ENCODE measurements at regions of chr10 and their contacts with region 1.

Region 1: GRCh38 chr10:97334370-97335175 is at the start of gene FRAT2:
- DNase-seq: peak; percentile 79 to 98 (median 86)
- ATAC-seq: peak; percentile 83 to 86
- H3K4me3 Mint-ChIP-seq: peak within 1 kb of the TSS; percentile 87 to 98 (median 92)
- H3K27ac Mint-ChIP-seq: peak within 1 kb of the TSS; percentile 87 to 97 (median 96)
- H3K4me1 Mint-ChIP-seq: peaks cover 26 to 48% (median 40%) of the 10 kb centered on the region in 4 donors
- H3K27me3 Mint-ChIP-seq: no peaks in the 10 kb centered on the region
- polyA plus RNA-seq, gene FRAT2: 9.3 to 27.4 (median 23.6) TPM

Region 2: DNA sequence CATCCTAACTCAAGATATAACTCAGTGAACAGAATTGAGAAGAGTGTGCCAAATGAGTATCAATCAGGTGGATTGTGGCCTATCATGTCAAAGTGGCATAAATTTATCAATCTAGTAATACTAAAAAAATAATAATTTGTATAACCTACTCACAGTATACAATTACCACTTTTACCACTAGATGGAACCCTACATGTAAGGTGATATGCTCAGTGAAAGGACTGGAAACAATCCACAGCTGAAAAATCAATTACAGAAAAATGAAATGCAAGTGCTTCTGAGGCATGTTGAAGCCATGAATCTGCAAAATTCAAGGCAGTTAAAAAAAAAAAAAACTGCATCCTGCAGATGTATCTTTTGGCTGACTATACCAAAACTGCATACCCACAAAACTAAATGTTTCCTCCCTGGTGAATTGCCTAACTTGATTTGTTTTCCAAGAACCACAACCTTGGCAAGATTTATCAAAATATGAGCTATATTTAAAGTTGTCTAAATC is 56.0 kb before region 1 on chr10:
- POLR2A ChIA-PET with region 1: interaction called, 13 read pairs
- DNase-seq: peak in 3 of 10 donors; percentile 57 to 63 (median 58)
- ATAC-seq: peak; percentile 90 to 94
- H3K4me3 Mint-ChIP-seq: no peak overlapping the region
- H3K27ac Mint-ChIP-seq: peak overlapping the region in 3 of 10 donors; percentile 18 to 63 (median 40)
- H3K4me1 Mint-ChIP-seq: peaks cover 5 to 22% (median 7%) of the 10 kb centered on the region in 4 donors
- H3K27me3 Mint-ChIP-seq: no peaks in the 10 kb centered on the region

Region 3: GRCh38 chr10:97318772-97319651 is 15.6 kb before region 1 on chr10 and contains the start of gene FRAT1:
- POLR2A ChIA-PET with region 1: interaction called, 179 read pairs
- DNase-seq: peak; percentile 79 to 100 (median 91)
- ATAC-seq: peak; percentile 65 to 70
- H3K4me3 Mint-ChIP-seq: peak within 1 kb of the TSS; percentile 89 to 98 (median 97)
- H3K27ac Mint-ChIP-seq: peak within 1 kb of the TSS; percentile 99 to 100 (median 100)
- H3K4me1 Mint-ChIP-seq: peaks cover 19 to 41% (median 33%) of the 10 kb centered on the region in 4 donors
- H3K27me3 Mint-ChIP-seq: peaks cover 0 to 1% (median 0%) of the 10 kb centered on the region in 5 donors
- polyA plus RNA-seq, gene FRAT1: 7.5 to 12.8 (median 12.7) TPM

Measured in naive thymus-derived CD8-positive, alpha-beta T cell (primary cell).